CD4-positive, alpha-beta memory T cell (primary cell): ENCODE measurements at regions of chr10 and their contacts with region 1.

Region 1: DNA sequence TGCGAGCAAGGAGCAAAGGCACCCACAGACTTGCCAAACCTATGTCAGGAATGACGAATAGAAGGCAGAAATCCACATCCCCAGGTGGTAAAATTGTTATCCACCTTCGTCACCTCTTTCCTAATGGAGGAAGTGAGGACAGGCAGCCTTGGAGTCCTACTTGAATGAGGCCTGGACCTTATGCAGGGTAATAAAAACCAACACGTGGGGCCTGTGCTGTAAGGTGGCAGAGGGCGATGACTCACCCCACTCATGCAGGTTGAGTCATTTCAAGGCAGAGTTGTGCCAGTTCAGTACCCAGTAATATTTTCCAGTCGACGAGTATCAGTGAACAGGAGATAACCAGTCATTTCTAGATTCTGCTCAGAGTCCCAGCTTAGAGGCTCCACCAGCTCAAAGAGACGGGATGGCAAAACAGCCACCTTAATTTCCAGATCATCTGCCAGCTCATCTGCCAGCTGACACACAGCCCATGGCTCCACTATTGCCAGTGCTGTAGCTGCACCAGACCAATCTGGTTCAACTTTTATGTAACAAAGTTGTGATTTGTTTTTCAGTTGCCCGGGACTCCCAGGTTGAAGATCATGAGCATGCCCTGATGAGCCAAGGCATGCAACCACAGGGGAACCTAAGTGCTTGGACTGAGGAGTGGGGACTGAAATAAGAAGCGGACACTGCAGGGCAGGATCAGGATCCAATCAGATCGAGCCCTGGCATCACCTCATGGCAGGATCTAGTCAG is 176.2 kb upstream of the ITGB1 start:
- DNase-seq: peak; percentile 59 to 96 (median 73)
- H3K4me3 ChIP-seq: no peak overlapping the region
- H3K4me3 Mint-ChIP-seq: peak overlapping the region; percentile 13 to 84 (median 62)
- H3K27ac ChIP-seq: peak overlapping the region; percentile 84
- H3K27ac Mint-ChIP-seq: peak overlapping the region; percentile 89 to 100 (median 100)
- H3K4me1 ChIP-seq: peaks cover 98% of the 10 kb centered on the region
- H3K4me1 Mint-ChIP-seq: peaks cover 71 to 97% (median 85%) of the 10 kb centered on the region in 4 donors
- H3K27me3 ChIP-seq: no peaks in the 10 kb centered on the region
- H3K27me3 Mint-ChIP-seq: no peaks in the 10 kb centered on the region

Region 2: GRCh38 chr10:32795598-32796183 is 338.5 kb before region 1 on chr10:
- CTCF ChIA-PET with region 1: no interaction called
- POLR2A ChIA-PET with region 1: no interaction called
- intact Hi-C with region 1: loop called (anchors 1 kb)
- DNase-seq: peak in 4 of 5 donors; percentile 34 to 46 (median 35)
- H3K4me3 ChIP-seq: no peak overlapping the region
- H3K4me3 Mint-ChIP-seq: no peak overlapping the region
- H3K27ac ChIP-seq: no peak overlapping the region
- H3K27ac Mint-ChIP-seq: peak overlapping the region in 4 of 7 donors; percentile 1 to 47 (median 22)
- H3K4me1 ChIP-seq: no peaks in the 10 kb centered on the region
- H3K4me1 Mint-ChIP-seq: peaks cover 0 to 5% (median 2%) of the 10 kb centered on the region in 4 donors
- H3K27me3 ChIP-seq: no peaks in the 10 kb centered on the region
- H3K27me3 Mint-ChIP-seq: no peaks in the 10 kb centered on the region

Region 3: DNA sequence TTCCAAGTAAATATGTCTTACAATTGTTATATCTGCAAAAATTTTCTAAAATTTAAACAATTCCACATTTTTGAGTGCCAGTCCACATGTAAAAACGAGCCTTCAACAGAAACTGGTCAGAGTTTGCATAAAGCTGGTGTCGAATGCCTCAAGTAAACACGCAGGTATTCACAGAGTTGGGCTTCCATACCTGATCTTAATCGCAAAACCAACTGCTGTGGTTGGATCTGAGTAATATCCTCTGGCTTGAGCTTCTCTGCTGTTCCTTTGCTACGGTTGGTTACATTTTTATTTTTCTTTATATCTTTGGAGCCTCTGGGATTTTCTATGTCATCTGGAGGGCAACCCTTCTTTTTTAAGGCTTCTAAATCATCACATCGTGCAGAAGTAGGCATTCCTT is 204.5 kb before region 1 on chr10:
- CTCF ChIA-PET with region 1: no interaction called
- POLR2A ChIA-PET with region 1: interaction called, 3 read pairs
- intact Hi-C with region 1: loop called (anchors 5 kb)
- DNase-seq: peak; percentile 18 to 80 (median 35)
- H3K4me3 ChIP-seq: no peak overlapping the region
- H3K4me3 Mint-ChIP-seq: peak overlapping the region in 7 of 8 donors; percentile 37 to 81 (median 59)
- H3K27ac ChIP-seq: no peak overlapping the region
- H3K27ac Mint-ChIP-seq: peak overlapping the region in 6 of 7 donors; percentile 1 to 90 (median 69)
- H3K4me1 ChIP-seq: peaks cover 72% of the 10 kb centered on the region
- H3K4me1 Mint-ChIP-seq: peaks cover 43 to 90% (median 61%) of the 10 kb centered on the region in 4 donors
- H3K27me3 ChIP-seq: no peaks in the 10 kb centered on the region
- H3K27me3 Mint-ChIP-seq: no peaks in the 10 kb centered on the region

Region 4: GRCh38 chr10:33032654-33033151 is 101.5 kb before region 1 on chr10:
- CTCF ChIA-PET with region 1: no interaction called
- POLR2A ChIA-PET with region 1: interaction called, 12 read pairs
- intact Hi-C with region 1: loop called (anchors 2 kb)
- DNase-seq: no peak
- H3K4me3 ChIP-seq: no peak overlapping the region
- H3K4me3 Mint-ChIP-seq: peak overlapping the region in 5 of 8 donors; percentile 6 to 50 (median 22)
- H3K27ac ChIP-seq: no peak overlapping the region
- H3K27ac Mint-ChIP-seq: peak overlapping the region; percentile 43 to 90 (median 81)
- H3K4me1 ChIP-seq: peaks cover 57% of the 10 kb centered on the region
- H3K4me1 Mint-ChIP-seq: peaks cover 38 to 55% (median 47%) of the 10 kb centered on the region in 4 donors
- H3K27me3 ChIP-seq: no peaks in the 10 kb centered on the region
- H3K27me3 Mint-ChIP-seq: no peaks in the 10 kb centered on the region

Region 5: DNA sequence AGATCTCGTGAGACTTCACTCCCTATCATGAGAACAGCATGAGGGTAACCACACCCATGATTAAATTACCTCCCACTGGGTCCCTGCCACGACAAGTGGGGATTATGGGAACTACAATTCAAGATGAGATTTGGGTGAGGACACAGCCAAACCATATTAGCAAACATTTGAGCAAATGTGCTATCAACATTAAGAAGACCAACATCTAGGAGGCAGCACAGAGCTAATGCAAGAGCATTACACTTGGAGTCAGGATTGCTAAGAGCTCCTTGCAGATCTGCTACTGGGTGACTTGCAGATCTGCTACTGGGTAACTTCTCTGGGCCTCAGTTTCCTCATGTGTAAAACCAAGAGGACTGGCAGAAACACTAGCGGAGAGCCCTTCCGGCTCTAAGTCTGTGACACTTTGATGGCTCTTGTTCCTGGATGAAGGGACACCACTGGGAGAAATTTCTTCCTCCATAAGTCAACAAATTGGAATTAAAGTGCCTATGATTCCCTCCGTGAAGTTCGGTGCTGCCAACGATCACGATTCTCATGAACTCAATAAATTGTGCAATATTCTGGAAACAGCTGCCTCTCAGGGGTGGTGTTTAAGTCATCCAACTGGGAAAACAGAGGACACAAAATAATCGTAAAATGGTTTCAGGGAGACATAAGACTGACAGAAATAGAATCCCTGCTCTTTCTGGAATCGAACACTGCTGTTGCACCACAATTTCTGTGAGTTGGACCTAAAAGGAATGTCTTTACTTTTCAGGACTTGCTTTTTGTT is 60.4 kb before region 1 on chr10:
- CTCF ChIA-PET with region 1: interaction called, 4 read pairs
- POLR2A ChIA-PET with region 1: no interaction called
- intact Hi-C with region 1: loop called (anchors 1 kb)
- DNase-seq: no peak
- H3K4me3 ChIP-seq: no peak overlapping the region
- H3K4me3 Mint-ChIP-seq: peak overlapping the region in 1 of 8 donors; percentile 18
- H3K27ac ChIP-seq: no peak overlapping the region
- H3K27ac Mint-ChIP-seq: no peak overlapping the region
- H3K4me1 ChIP-seq: peaks cover 7% of the 10 kb centered on the region
- H3K4me1 Mint-ChIP-seq: peaks cover 17 to 57% (median 28%) of the 10 kb centered on the region in 4 donors
- H3K27me3 ChIP-seq: no peaks in the 10 kb centered on the region
- H3K27me3 Mint-ChIP-seq: no peaks in the 10 kb centered on the region

Region 6: DNA sequence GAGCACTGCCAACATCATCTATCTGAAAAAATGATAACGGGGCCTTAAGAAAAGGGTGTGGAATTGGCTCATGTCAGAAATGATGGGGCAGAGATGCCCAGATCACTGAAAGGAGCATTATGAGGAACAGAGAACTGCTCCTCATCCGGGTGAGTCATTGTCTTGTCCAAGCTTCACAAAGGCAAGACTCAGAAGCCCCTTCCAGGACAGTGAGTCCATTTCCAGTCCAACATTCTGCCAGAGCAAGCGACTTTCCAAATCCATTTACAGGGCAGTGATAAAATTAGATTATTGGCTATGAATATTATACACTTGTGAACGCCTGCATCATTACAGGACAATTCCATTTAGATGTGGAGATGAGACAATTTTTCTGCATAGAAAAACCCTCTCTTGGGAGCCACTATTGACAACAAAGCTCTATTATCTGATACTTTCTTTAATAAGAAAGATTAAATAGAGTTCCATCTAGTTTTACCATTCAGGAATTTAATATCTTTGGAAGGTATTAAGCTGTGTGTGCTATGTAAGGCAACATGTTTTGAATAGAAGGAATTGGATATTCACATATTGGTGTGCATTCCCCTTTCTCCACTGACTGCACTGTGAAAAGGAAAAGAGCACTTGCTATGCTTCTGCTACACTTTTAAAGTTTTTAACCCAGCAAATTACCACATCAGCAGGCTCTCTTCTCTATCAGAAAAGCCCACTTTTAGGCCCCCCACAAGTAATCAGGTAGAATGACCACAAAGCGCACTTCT is 40.7 kb after region 1 on chr10:
- CTCF ChIA-PET with region 1: no interaction called
- POLR2A ChIA-PET with region 1: no interaction called
- intact Hi-C with region 1: no loop called
- DNase-seq: no peak
- H3K4me3 ChIP-seq: no peak overlapping the region
- H3K4me3 Mint-ChIP-seq: no peak overlapping the region
- H3K27ac ChIP-seq: no peak overlapping the region
- H3K27ac Mint-ChIP-seq: no peak overlapping the region
- H3K4me1 ChIP-seq: no peaks in the 10 kb centered on the region
- H3K4me1 Mint-ChIP-seq: no peaks in the 10 kb centered on the region
- H3K27me3 ChIP-seq: no peaks in the 10 kb centered on the region
- H3K27me3 Mint-ChIP-seq: peaks cover 11 to 15% of the 10 kb centered on the region in 2 donors